Spleen (tissue), 13 donors: ENCODE measurements at regions of chr6 and their contacts with region 1.

Region 1: GRCh38 chr6:13487122-13488014 is at the start of gene GFOD1:
- DNase-seq: peak; percentile 98
- H3K4me3 ChIP-seq: peak within 1 kb of the TSS; percentile 68 to 99 (median 94)
- H3K27ac ChIP-seq: peak within 1 kb of the TSS; percentile 90 to 97 (median 94)
- H3K4me1 ChIP-seq: peaks cover 9 to 58% (median 37%) of the 10 kb centered on the region in 6 donors
- H3K27me3 ChIP-seq: no peaks in the 10 kb centered on the region
- CTCF ChIP-seq: peak in 5 of 11 experiments; percentile 10 to 31 (median 14)
- POLR2A ChIP-seq: peak in 1 of 3 donors; percentile 93
- total RNA-seq, gene GFOD1: 16.0 to 54.0 (median 37.4) TPM

Region 2: GRCh38 chr6:13538084-13538483 is 50.7 kb after region 1 on chr6:
- intact Hi-C with region 1: loop called (anchors 10 kb)
- DNase-seq: no peak
- H3K4me3 ChIP-seq: no peak overlapping the region
- H3K27ac ChIP-seq: peak overlapping the region in 3 of 8 donors; percentile 3 to 52 (median 23)
- H3K4me1 ChIP-seq: peaks cover 0 to 31% (median 17%) of the 10 kb centered on the region in 6 donors
- H3K27me3 ChIP-seq: no peaks in the 10 kb centered on the region
- CTCF ChIP-seq: peak; percentile 11 to 62 (median 48)
- POLR2A ChIP-seq: no peak

Region 3: GRCh38 chr6:14129575-14129974 is 642.2 kb after region 1 on chr6:
- intact Hi-C with region 1: no loop called
- DNase-seq: peak; percentile 80
- H3K4me3 ChIP-seq: no peak overlapping the region
- H3K27ac ChIP-seq: peak overlapping the region in 2 of 8 donors; percentile 8 to 22
- H3K4me1 ChIP-seq: peaks cover 4 to 67% (median 26%) of the 10 kb centered on the region in 6 donors
- H3K27me3 ChIP-seq: no peaks in the 10 kb centered on the region
- CTCF ChIP-seq: peak; percentile 14 to 67 (median 60)
- POLR2A ChIP-seq: no peak